ENCODE measurements at regions of chr1 and their contacts with region 1.

Region 1: DNA sequence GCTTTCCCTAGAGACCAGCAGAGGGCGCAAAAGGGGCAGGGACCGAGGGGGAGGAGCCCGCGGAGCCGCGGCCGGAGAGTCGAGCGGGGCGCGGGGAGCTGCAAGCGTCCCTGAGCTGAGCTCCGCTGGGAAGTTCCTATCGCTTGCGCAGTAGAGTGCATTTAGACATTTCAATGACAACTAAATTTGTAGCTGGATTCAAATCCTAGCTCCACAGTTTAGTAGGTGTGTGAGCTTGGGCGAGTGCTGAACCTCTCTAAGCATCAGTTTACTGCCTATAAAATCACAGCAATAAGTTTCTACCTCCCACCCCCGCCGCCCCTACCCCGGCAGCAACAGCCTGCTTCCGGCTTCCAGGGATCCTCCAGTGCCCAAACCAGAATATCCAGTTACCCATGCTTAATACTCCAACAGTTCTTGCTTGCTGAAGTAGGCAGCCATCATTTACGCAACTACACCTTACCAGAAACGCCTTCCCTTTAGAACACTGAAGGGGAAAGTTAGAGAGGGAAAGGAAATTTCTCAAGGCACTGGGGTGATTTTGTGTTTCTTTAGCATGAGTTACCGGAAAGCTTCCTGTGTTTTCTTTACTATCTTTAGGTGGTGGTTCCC is 9.1 kb downstream of the TLR5 start:
- DNase-seq: peak; percentile 15
- ATAC-seq: peak; percentile 84
- H3K4me3 ChIP-seq: no peak overlapping the region
- H3K27ac ChIP-seq: no peak overlapping the region
- H3K4me1 ChIP-seq: no peaks in the 10 kb centered on the region
- H3K27me3 ChIP-seq: peaks cover 0 to 12% of the 10 kb centered on the region in 2 experiments; a peak in 2 of 4 replicates
- CTCF ChIP-seq: peak; percentile 88 to 95 (median 93)
- EP300 ChIP-seq: no peak
- POLR2A ChIP-seq: no peak
- RAD21 ChIP-seq: peak; percentile 78

Region 2: GRCh38 chr1:222465211-222466041 is 668.5 kb before region 1 on chr1:
- CTCF ChIA-PET with region 1: interaction called, 3 read pairs
- POLR2A ChIA-PET with region 1: no interaction called
- RAD21 ChIA-PET with region 1: no interaction called
- SMC1A ChIA-PET with region 1: no interaction called
- in situ Hi-C with region 1: no loop called
- intact Hi-C with region 1: loop called (anchors 10 kb)
- DNase-seq: peak; percentile 57
- ATAC-seq: peak; percentile 98
- H3K4me3 ChIP-seq: peak overlapping the region; percentile 68; the same call in 1 of the 2 replicates
- H3K27ac ChIP-seq: peak overlapping the region; percentile 62
- H3K4me1 ChIP-seq: no peaks in the 10 kb centered on the region
- H3K27me3 ChIP-seq: peaks cover 2 to 5% of the 10 kb centered on the region in 2 experiments; a peak in 2 of 4 replicates
- CTCF ChIP-seq: peak; percentile 96 to 99 (median 96)
- EP300 ChIP-seq: no peak
- POLR2A ChIP-seq: peak; percentile 47; the same call in 1 of the 2 replicates
- RAD21 ChIP-seq: peak; percentile 73

Region 3: DNA sequence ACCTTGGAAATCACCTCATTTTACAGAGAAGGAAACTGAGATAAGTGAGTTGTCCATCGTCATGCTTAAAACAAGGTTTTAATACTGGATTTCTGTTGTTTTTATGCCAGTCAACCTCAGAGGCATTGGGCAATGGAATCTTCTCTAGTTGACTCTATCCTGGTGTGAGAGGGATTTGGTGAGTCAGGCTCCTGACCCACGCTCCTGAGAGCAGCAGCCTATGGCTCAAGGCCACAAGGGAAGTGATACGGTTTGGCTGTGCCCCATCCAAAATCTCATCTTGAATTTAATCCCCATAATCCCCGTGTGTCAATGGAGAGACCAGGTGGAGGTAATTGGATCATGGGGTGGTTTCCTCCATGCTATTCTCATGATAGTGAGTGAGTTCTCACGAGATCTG is 81.0 kb before region 1 on chr1:
- CTCF ChIA-PET with region 1: no interaction called
- POLR2A ChIA-PET with region 1: no interaction called
- RAD21 ChIA-PET with region 1: no interaction called
- SMC1A ChIA-PET with region 1: no interaction called
- in situ Hi-C with region 1: no loop called
- intact Hi-C with region 1: no loop called
- DNase-seq: no peak
- ATAC-seq: no peak
- H3K4me3 ChIP-seq: no peak overlapping the region
- H3K27ac ChIP-seq: no peak overlapping the region
- H3K4me1 ChIP-seq: no peaks in the 10 kb centered on the region
- H3K27me3 ChIP-seq: no peaks in the 10 kb centered on the region
- CTCF ChIP-seq: no peak
- EP300 ChIP-seq: no peak
- POLR2A ChIP-seq: no peak
- RAD21 ChIP-seq: no peak

Region 4: GRCh38 chr1:223161321-223161720 is 27.4 kb after region 1 on chr1:
- CTCF ChIA-PET with region 1: interaction called, 21 read pairs
- POLR2A ChIA-PET with region 1: no interaction called
- RAD21 ChIA-PET with region 1: interaction called, 8 read pairs
- SMC1A ChIA-PET with region 1: interaction called, 10 read pairs
- in situ Hi-C with region 1: no loop called
- intact Hi-C with region 1: no loop called
- DNase-seq: no peak
- ATAC-seq: peak; percentile 74
- H3K4me3 ChIP-seq: no peak overlapping the region
- H3K27ac ChIP-seq: no peak overlapping the region
- H3K4me1 ChIP-seq: no peaks in the 10 kb centered on the region
- H3K27me3 ChIP-seq: peaks cover 0 to 7% of the 10 kb centered on the region in 2 experiments; a peak in 1 of 4 replicates
- CTCF ChIP-seq: 0 out of 6 replicates have a peak, but pooled peaks of 1 of the 3 experiments have one; percentile 19
- EP300 ChIP-seq: no peak
- POLR2A ChIP-seq: no peak
- RAD21 ChIP-seq: no peak

Region 5: DNA sequence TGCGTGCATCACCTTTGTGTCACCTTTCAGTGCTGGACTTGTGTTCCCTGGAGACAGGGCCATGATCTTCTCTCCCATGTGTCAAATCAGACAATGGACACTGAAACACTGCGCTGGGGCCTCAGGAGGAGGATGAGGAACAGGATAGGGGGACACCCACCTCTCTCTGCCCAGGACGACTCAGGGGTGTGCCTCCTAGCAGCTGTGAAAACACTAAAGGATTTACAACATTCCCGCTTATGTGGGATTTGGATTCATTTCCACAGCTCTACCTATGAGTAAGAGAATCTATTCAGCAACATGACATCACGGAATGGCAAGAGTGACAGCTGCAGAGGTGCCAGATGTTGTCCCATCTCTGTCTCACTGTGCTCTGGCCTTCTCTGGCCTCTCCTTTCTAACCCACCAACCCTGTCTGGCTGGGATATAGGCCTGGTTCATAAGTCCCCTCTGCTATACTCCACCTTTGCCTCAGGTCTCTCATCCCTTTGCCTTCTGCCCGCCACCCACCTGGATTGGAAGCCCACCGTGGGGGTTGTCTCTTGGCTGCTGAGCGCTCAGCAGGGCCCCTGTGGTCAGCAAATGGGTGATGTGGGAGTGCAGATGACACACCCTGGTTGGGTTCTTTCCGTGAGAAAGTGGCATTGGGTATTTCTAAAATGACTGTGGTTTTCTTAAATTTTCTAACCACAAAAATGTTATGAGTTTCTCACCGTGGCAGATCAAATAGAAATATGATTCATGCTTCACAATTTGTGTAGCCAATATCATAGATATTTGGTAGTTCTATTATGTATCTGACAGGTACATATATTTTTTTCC is 56.2 kb after region 1 on chr1:
- CTCF ChIA-PET with region 1: interaction called, 15 read pairs
- POLR2A ChIA-PET with region 1: interaction called, 3 read pairs
- RAD21 ChIA-PET with region 1: interaction called, 3 read pairs
- SMC1A ChIA-PET with region 1: interaction called, 11 read pairs
- in situ Hi-C with region 1: no loop called
- intact Hi-C with region 1: loop called (anchors 2 kb)
- DNase-seq: peak; percentile 30
- ATAC-seq: peak; percentile 90
- H3K4me3 ChIP-seq: no peak overlapping the region
- H3K27ac ChIP-seq: no peak overlapping the region
- H3K4me1 ChIP-seq: no peaks in the 10 kb centered on the region; the same call in 1 of the 2 replicates
- H3K27me3 ChIP-seq: no peaks in the 10 kb centered on the region
- CTCF ChIP-seq: no peak
- EP300 ChIP-seq: peak; percentile 77 to 91; a peak in 3 of 4 replicates
- POLR2A ChIP-seq: no peak
- RAD21 ChIP-seq: no peak

Region 6: DNA sequence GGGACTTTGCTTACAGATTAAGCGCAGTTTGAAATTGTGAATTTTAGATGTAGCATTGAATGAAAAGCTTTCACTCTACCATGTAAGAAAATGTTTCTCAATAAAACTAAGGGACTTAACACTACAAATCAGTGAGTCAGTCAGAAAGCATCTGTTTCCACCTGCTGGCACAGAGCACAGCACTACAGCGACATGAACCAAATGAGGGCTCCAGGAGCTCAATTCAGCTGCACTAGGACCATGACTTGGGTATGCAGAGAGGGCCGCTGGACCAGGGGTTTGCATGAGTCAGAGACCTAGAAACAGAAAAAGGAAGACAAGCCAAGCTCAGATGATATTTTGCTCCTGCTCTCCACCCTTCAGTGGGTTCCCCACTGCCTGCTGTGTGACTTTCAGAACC is 224.9 kb after region 1 on chr1:
- CTCF ChIA-PET with region 1: interaction called, 10 read pairs
- POLR2A ChIA-PET with region 1: no interaction called
- RAD21 ChIA-PET with region 1: interaction called, 9 read pairs
- SMC1A ChIA-PET with region 1: interaction called, 3 read pairs
- in situ Hi-C with region 1: no loop called
- intact Hi-C with region 1: loop called (anchors 10 kb)
- DNase-seq: no peak
- ATAC-seq: peak; percentile 26; the same call in 1 of the 3 replicates
- H3K4me3 ChIP-seq: no peak overlapping the region
- H3K27ac ChIP-seq: no peak overlapping the region
- H3K4me1 ChIP-seq: no peaks in the 10 kb centered on the region
- H3K27me3 ChIP-seq: peaks cover 4 to 9% of the 10 kb centered on the region in 2 experiments; a peak in 3 of 4 replicates
- CTCF ChIP-seq: peak in 1 of 3 experiments; percentile 22; a peak in 1 of 6 replicates
- EP300 ChIP-seq: no peak
- POLR2A ChIP-seq: no peak
- RAD21 ChIP-seq: no peak

Region 7: GRCh38 chr1:224329842-224330753 is 1196.2 kb after region 1 on chr1 and contains the start of gene NVL:
- CTCF ChIA-PET with region 1: no interaction called
- POLR2A ChIA-PET with region 1: no interaction called
- RAD21 ChIA-PET with region 1: no interaction called
- SMC1A ChIA-PET with region 1: no interaction called
- in situ Hi-C with region 1: loop called (anchors 25 kb)
- intact Hi-C with region 1: no loop called
- DNase-seq: peak; percentile 48
- ATAC-seq: peak; percentile 85
- H3K4me3 ChIP-seq: peak within 1 kb of the TSS; percentile 97
- H3K27ac ChIP-seq: peak within 1 kb of the TSS; percentile 99
- H3K4me1 ChIP-seq: peaks cover 7% of the 10 kb centered on the region
- H3K27me3 ChIP-seq: no peaks in the 10 kb centered on the region
- CTCF ChIP-seq: no peak
- EP300 ChIP-seq: no peak
- POLR2A ChIP-seq: peak; percentile 85
- RAD21 ChIP-seq: no peak
- polyA plus RNA-seq, gene NVL: 20.3 to 30.4 TPM